Endothelial cell of umbilical vein (primary cell): ENCODE measurements at regions of chr1 and their contacts with region 1.

Region 1: DNA sequence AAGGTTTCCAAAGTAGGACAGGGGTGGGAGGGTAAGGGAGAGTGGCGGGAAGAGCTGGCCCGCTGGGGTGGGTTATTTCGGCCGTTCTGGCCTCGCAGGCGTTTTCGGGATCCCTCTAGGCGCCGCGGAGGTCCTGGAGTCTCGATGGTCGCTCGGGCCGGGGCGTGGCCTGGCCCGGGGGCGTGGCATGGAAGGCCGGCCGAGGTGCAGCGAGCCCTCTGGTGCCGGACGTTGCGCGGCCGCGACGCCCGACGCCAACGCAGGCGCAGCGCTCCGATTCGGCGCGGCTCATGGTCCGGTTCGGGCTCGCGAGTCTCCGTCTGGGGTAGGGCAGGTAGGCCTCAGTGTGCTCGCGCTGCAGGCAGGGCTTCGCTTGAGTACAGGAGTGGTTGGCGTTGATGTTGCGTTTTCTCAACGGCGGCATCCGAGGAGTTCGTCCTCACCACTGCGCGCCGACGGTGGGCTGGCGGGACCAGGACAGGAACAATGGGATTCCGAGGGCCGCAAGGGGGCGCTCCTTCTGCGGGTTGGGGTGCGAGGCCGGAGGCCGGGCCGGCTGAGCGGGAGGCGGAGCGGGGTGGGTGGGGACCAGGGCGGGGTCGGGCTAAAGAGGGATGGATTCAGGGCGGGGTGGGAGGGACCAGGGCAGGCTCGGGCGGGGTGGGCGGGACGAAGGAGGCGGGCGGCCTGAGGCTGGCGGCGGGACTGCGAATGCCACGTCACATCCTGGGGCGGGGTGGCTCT is at the start of gene PGBD2:
- DNase-seq: peak; percentile 93
- H3K4me3 ChIP-seq: peak within 1 kb of the TSS; percentile 52 to 74 (median 69)
- H3K27ac ChIP-seq: peak within 1 kb of the TSS; percentile 76
- H3K4me1 ChIP-seq: peaks cover 9% of the 10 kb centered on the region
- H3K27me3 ChIP-seq: no peaks in the 10 kb centered on the region
- CTCF ChIP-seq: peak; percentile 56 to 86
- POLR2A ChIP-seq: peak; percentile 84
- total RNA-seq, gene PGBD2: 5.2 and 5.9 TPM in 2 replicates

Region 2: DNA sequence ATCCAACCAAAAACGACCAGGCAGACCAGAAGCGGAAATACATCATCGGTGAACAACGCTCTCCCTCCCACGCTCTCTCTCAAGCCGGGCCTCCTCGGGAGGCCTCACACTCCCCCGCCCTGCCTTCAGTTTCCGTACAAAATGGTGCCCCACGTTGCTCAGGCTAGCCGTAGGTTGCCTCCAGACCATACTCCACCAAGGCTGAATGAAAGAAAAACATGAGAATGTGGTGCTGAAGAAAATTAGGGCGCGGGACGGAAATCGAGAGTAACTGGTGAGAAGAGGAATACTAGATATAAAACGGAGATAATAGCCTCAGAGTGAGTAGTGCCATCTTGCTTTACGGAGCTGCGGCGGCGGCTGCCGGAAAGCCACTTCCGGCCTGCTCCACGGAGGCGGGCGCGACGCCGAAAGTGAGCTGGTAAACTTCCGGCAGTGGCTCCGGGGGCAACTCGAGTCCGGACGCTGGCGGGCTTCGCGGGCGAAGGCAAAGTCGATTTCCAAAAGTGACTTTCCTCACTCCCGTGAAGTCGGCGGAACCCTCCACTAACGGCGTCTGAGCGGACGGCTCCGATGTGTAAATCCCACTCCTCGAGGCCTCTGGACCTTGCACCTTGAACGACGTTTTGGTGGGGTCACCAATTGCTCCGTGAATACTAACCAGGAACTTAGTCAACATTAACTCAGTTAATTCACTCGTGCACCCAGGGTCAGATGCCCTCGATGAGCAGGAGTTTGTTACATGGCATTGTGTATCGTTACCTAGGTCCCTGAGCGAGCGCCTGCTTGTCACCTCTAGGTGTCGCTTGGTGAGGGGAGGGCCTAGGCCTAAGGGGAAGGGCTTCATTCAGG is 80.0 kb before region 1 on chr1 and contains the start of gene SH3BP5L:
- CTCF ChIA-PET with region 1: no interaction called
- POLR2A ChIA-PET with region 1: no interaction called
- dilution Hi-C with region 1: no loop called
- intact Hi-C with region 1: loop called (anchors 1 kb)
- DNase-seq: peak; percentile 96
- H3K4me3 ChIP-seq: peak within 1 kb of the TSS; percentile 51 to 78 (median 73)
- H3K27ac ChIP-seq: peak within 1 kb of the TSS; percentile 89
- H3K4me1 ChIP-seq: peaks cover 45% of the 10 kb centered on the region
- H3K27me3 ChIP-seq: no peaks in the 10 kb centered on the region
- CTCF ChIP-seq: peak; percentile 62 to 69
- POLR2A ChIP-seq: peak; percentile 59
- total RNA-seq, gene SH3BP5L: 24.7 and 26.5 TPM in 2 replicates

Region 3: GRCh38 chr1:248837794-248838356 is 68.3 kb before region 1 on chr1 and contains the start of gene ZNF672:
- CTCF ChIA-PET with region 1: interaction called, 3 read pairs
- POLR2A ChIA-PET with region 1: no interaction called
- dilution Hi-C with region 1: no loop called
- intact Hi-C with region 1: loop called (anchors 1 kb)
- DNase-seq: peak; percentile 98
- H3K4me3 ChIP-seq: peak within 1 kb of the TSS; percentile 60 to 91 (median 83)
- H3K27ac ChIP-seq: peak within 1 kb of the TSS; percentile 83
- H3K4me1 ChIP-seq: peaks cover 14% of the 10 kb centered on the region
- H3K27me3 ChIP-seq: no peaks in the 10 kb centered on the region
- CTCF ChIP-seq: no peak
- POLR2A ChIP-seq: peak; percentile 68
- total RNA-seq, gene ZNF672: 20.1 and 21.5 TPM in 2 replicates

Region 4: GRCh38 chr1:248858891-248859889 is 47.0 kb before region 1 on chr1 and contains the start of gene ZNF692:
- CTCF ChIA-PET with region 1: interaction called, 4 read pairs
- POLR2A ChIA-PET with region 1: no interaction called
- dilution Hi-C with region 1: no loop called
- intact Hi-C with region 1: loop called (anchors 1 kb)
- DNase-seq: peak; percentile 96
- H3K4me3 ChIP-seq: peak within 1 kb of the TSS; percentile 18 to 68 (median 39)
- H3K27ac ChIP-seq: peak within 1 kb of the TSS; percentile 22
- H3K4me1 ChIP-seq: peaks cover 23% of the 10 kb centered on the region
- H3K27me3 ChIP-seq: peaks cover 2 to 4% of the 10 kb centered on the region in 2 experiments
- CTCF ChIP-seq: no peak
- POLR2A ChIP-seq: peak; percentile 98
- total RNA-seq, gene ZNF692: 36.6 and 38.6 TPM in 2 replicates

Region 5: DNA sequence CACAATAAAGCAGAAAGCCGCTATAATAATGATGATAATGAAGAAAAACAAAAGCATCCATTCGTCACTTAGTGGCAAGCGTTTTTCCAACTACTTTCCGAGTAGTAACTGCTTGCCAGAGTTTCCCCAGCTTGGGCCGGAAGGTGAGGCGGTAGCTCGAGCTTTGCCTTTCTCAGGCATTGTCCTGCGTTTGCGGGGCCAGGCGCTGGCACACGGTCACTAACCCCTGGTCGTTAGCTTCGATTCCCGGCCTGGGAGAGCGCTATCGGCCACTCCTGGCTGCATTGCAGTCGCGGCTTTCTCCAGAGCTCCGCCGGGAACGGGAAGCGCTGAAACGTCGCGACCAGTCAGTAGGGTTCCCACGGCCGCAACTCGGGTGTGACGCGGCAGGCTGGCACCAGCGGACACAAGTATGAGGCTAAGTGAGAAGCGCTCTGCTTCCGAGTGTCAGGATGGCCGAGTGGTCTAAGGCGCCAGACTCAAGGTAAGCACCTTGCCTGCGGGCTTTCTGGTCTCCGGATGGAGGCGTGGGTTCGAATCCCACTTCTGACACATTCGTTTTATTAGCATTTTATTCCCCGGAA is 32.7 kb before region 1 on chr1:
- CTCF ChIA-PET with region 1: no interaction called
- POLR2A ChIA-PET with region 1: interaction called, 3 read pairs
- dilution Hi-C with region 1: no loop called
- intact Hi-C with region 1: loop called (anchors 1 kb)
- DNase-seq: peak; percentile 99
- H3K4me3 ChIP-seq: peak overlapping the region; percentile 49 to 81 (median 62)
- H3K27ac ChIP-seq: peak overlapping the region; percentile 76
- H3K4me1 ChIP-seq: no peaks in the 10 kb centered on the region
- H3K27me3 ChIP-seq: peaks cover 0 to 3% of the 10 kb centered on the region in 2 experiments
- CTCF ChIP-seq: peak in 1 of 2 donors; percentile 9
- POLR2A ChIP-seq: no peak

Region 6: DNA sequence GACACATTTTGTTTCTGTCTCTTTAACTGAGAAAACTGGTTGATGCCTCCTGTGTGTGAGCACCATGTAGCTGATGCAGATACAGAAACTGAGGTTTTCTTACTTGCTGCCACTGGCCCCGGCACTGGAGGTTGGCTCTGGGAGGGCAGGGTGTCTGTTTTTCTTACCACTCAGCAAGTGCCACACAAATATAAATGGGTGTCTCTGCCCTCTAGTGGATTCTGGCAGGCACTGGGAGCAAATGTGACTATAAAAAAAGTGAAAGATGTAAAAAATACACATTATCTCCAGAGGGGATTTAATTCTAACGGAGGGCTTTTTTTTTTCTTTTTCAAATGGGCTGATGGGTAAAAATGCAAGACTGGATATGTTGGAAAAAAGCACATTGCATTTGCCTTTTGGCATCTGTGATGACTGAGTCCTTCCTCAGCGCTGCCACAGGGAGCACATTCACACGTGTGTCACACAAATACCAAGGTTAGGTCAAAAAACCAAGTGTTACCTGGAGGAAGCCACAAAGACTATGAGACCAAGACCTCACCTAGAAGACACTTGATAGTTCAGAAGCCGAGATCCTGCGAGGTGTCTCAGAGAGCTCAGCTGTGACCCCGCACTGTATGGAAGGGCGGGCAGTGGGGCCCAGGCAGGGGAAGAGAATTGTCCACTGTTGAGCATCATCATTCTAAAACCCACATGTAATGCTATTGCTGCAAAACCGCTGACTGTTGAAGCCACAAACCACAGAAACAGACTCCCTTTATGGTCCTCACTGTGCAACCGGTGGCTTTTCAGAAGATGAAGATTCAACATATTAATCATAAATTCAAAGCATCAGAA is 18.7 kb after region 1 on chr1:
- CTCF ChIA-PET with region 1: no interaction called
- POLR2A ChIA-PET with region 1: no interaction called
- dilution Hi-C with region 1: no loop called
- intact Hi-C with region 1: loop called (anchors 1 kb)
- DNase-seq: peak; percentile 50
- H3K4me3 ChIP-seq: no peak overlapping the region
- H3K27ac ChIP-seq: no peak overlapping the region
- H3K4me1 ChIP-seq: no peaks in the 10 kb centered on the region
- H3K27me3 ChIP-seq: no peaks in the 10 kb centered on the region
- CTCF ChIP-seq: peak; percentile 34 to 54
- POLR2A ChIP-seq: no peak